Caco-2 (cell line): ENCODE measurements at regions of chr14 and their contacts with region 1.

Region 1: GRCh38 chr14:81533536-81534343 is at the start of gene SEL1L:
- DNase-seq: peak; percentile 99 to 100
- H3K4me3 ChIP-seq: peak within 1 kb of the TSS; percentile 74
- H3K4me3 Mint-ChIP-seq: peak within 1 kb of the TSS; percentile 93
- H3K27ac Mint-ChIP-seq: peak within 1 kb of the TSS; percentile 73
- H3K4me1 ChIP-seq: peaks cover 28% of the 10 kb centered on the region
- H3K4me1 Mint-ChIP-seq: peaks cover 20% of the 10 kb centered on the region
- H3K27me3 ChIP-seq: no peaks in the 10 kb centered on the region
- H3K27me3 Mint-ChIP-seq: no peaks in the 10 kb centered on the region
- CTCF ChIP-seq: no peak
- total RNA-seq, gene SEL1L: 103 and 116 TPM in 2 replicates

Region 2: DNA sequence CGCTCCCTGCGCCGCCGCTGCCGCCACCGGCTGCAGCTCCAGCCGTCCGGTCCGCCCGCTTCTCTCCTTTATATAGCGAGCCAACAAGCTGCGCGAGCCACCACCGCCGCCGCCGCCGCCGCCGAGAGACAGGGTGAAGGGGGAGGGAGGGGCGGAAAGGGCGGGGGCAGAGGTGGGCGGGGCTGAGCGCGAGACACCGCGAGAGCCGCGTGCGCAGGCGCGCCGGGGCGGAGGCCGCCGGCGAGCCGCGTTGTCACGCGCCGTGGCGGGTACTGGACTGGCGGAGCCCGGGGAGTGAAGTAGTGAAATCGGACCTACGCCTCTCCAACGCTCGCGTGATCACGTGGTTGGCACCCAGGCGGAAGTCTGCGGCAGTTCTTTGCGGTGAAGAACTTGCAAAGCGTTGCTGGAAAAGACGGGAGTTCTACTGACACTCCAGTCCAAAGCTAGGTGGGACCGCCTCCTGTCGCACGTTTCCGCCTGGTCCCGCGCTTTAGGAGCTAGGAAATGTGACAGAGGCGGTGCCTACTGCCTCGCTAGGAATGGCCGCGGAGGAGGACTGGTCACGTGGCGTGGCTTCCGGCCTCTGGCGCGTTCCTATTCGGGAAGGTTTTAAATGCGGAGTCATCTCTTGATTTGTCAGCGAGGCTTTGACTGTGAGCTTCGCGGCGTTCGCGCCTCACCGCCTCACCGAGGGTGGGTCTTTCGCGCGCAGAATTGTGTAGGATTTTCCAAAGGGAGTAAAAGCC is 312.7 kb before region 1 on chr14 and contains the start of gene GTF2A1:
- CTCF ChIA-PET with region 1: no interaction called
- POLR2A ChIA-PET with region 1: interaction called, 15 read pairs
- intact Hi-C with region 1: loop called (anchors 5 kb)
- DNase-seq: peak; percentile 95 to 96
- H3K4me3 ChIP-seq: peak within 1 kb of the TSS; percentile 77
- H3K4me3 Mint-ChIP-seq: peak within 1 kb of the TSS; percentile 97
- H3K27ac Mint-ChIP-seq: peak within 1 kb of the TSS; percentile 98
- H3K4me1 ChIP-seq: peaks cover 23% of the 10 kb centered on the region
- H3K4me1 Mint-ChIP-seq: peaks cover 9% of the 10 kb centered on the region
- H3K27me3 ChIP-seq: no peaks in the 10 kb centered on the region
- H3K27me3 Mint-ChIP-seq: peaks cover 3% of the 10 kb centered on the region
- CTCF ChIP-seq: no peak
- total RNA-seq, gene GTF2A1: 35.1 and 42.7 TPM in 2 replicates

Region 3: DNA sequence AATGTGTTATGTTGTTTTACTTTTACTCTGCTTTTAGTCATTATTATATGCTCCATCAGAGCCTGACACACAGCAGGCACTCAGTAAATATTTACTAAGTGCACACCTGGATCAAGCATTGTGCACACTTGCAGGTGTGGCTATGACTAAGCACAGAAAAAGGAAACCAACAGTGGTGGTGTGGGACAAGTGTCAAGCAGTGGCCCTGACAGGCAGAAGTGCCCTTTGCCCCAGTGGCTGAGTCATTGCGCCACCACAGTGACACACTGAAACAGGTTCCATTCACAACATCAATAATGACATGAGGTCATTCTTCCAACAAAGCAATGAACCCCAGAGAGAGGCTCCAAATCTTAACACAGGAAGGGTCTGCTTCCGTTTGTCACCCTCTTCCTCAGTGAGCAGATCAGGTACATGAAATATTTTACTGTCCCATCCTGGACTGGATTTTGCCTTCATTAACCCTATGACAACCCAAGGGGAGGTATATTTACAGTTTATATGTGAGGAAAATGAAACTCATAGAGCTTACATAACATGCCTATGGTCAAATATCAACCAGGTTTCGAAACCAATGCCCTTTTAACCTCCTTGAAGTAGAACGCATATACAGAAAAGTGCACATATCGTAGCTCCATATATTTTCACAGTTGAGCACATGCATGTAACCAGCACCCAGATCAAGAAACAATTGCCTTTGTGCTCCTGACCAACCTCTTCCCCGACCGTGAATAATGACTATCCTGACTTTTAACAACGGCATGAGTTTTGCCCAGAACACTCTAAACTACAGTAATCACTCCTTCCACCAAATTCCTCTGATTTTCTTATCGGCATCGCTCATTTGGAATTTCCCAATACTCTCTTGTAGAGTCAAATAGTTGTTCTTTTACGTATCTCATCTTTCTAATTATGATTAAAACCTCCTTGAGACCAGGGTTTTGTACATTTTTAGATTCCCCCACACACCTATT is 230.2 kb before region 1 on chr14:
- CTCF ChIA-PET with region 1: no interaction called
- POLR2A ChIA-PET with region 1: no interaction called
- intact Hi-C with region 1: loop called (anchors 5 kb)
- DNase-seq: peak; percentile 91 to 95
- H3K4me3 ChIP-seq: no peak overlapping the region; the same call in 1 of the 2 replicates
- H3K4me3 Mint-ChIP-seq: peak overlapping the region; percentile 66
- H3K27ac Mint-ChIP-seq: peak overlapping the region; percentile 83
- H3K4me1 ChIP-seq: peaks cover 32% of the 10 kb centered on the region
- H3K4me1 Mint-ChIP-seq: peaks cover 39% of the 10 kb centered on the region
- H3K27me3 ChIP-seq: no peaks in the 10 kb centered on the region
- H3K27me3 Mint-ChIP-seq: no peaks in the 10 kb centered on the region
- CTCF ChIP-seq: no peak

Region 4: DNA sequence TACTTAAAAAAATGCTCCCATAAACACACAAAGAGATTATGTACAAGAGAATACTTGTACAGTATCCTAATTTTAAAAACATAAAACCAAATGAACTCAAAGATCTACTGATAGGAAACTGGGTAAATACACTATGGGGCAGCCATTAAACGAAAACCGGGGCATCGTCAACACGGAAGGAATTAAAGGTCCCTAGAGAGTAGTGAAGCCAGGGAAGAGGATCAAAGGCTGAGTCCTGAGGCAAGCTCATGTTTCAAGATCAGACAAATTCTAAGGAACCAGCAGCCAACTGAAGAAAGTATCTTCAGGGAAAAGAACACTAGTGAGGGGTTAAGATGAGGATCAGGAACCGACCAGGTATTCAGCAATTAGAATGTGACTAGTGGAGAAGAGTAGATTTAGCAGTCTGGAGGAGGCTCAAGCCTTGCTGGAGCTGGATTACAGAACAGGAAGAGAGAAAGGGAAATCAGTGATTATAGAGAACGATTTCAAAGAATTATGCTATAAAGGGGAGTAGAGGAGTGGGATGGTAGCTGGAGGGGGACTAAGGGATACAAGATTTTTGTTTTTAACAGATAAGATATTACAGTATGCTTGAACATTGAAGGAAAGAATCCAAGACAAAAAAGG is 23.8 kb before region 1 on chr14:
- CTCF ChIA-PET with region 1: interaction called, 4 read pairs
- POLR2A ChIA-PET with region 1: interaction called, 12 read pairs
- intact Hi-C with region 1: no loop called
- DNase-seq: peak in 1 of 2 experiments; percentile 6
- H3K4me3 ChIP-seq: no peak overlapping the region
- H3K4me3 Mint-ChIP-seq: peak overlapping the region; percentile 59
- H3K27ac Mint-ChIP-seq: peak overlapping the region; percentile 70
- H3K4me1 ChIP-seq: peaks cover 42% of the 10 kb centered on the region
- H3K4me1 Mint-ChIP-seq: peaks cover 14% of the 10 kb centered on the region
- H3K27me3 ChIP-seq: no peaks in the 10 kb centered on the region
- H3K27me3 Mint-ChIP-seq: no peaks in the 10 kb centered on the region
- CTCF ChIP-seq: no peak

Region 5: GRCh38 chr14:81516986-81517797 is 16.5 kb before region 1 on chr14:
- CTCF ChIA-PET with region 1: no interaction called
- POLR2A ChIA-PET with region 1: interaction called, 5 read pairs
- intact Hi-C with region 1: loop called (anchors 1 kb)
- DNase-seq: peak; percentile 66 to 77
- H3K4me3 ChIP-seq: no peak overlapping the region
- H3K4me3 Mint-ChIP-seq: peak overlapping the region; percentile 53
- H3K27ac Mint-ChIP-seq: peak overlapping the region; percentile 82
- H3K4me1 ChIP-seq: peaks cover 34% of the 10 kb centered on the region
- H3K4me1 Mint-ChIP-seq: peaks cover 26% of the 10 kb centered on the region
- H3K27me3 ChIP-seq: no peaks in the 10 kb centered on the region
- H3K27me3 Mint-ChIP-seq: no peaks in the 10 kb centered on the region
- CTCF ChIP-seq: no peak

Region 6: GRCh38 chr14:82549306-82549990 is 1015.7 kb after region 1 on chr14:
- CTCF ChIA-PET with region 1: no interaction called
- POLR2A ChIA-PET with region 1: no interaction called
- intact Hi-C with region 1: loop called (anchors 10 kb)
- DNase-seq: no peak
- H3K4me3 ChIP-seq: no peak overlapping the region
- H3K4me3 Mint-ChIP-seq: no peak overlapping the region
- H3K27ac Mint-ChIP-seq: no peak overlapping the region
- H3K4me1 ChIP-seq: peaks cover 6% of the 10 kb centered on the region
- H3K4me1 Mint-ChIP-seq: peaks cover 3% of the 10 kb centered on the region
- H3K27me3 ChIP-seq: no peaks in the 10 kb centered on the region
- H3K27me3 Mint-ChIP-seq: no peaks in the 10 kb centered on the region
- CTCF ChIP-seq: no peak